Heart left ventricle (tissue), 16 donors: ENCODE measurements at regions of chr1 and their contacts with region 1.

Region 1: DNA sequence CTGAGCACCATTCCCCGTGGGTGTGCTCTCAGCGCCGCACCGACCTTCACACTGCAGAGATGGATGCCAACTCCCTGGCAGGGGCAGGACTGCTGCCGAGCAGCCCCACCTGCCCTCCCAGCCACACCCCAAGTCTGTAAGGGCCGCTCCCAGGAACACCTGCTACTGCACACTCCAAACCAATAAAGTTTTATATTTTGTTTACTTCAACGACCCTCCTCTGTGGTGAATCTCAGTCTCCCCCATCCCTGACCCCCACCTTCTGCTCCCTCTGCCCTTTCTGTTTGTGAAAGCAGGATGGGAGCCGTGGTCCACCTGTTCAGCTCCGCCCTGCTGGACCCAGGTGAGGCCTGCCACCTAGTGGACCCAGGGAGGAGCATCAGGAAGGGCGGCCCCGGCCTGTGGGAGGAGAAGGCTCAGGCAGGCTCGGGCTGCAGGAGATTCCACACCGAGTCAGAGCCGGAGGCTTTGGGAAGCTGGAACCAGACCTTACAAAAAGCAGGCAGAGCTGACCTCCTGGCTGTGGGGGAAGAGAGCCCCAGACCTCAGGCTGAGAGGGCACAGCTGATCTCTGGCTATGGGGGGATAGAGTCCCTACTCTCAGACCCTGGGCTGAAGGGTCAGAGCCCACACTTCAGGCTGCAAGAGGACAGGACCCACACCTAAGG is 982 bp upstream of the TMEM82 start:
- DNase-seq: peak; percentile 69 to 89 (median 72)
- ATAC-seq: peak; percentile 62 to 81 (median 75)
- H3K4me3 ChIP-seq: no peak overlapping the region
- H3K27ac ChIP-seq: no peak overlapping the region
- H3K4me1 ChIP-seq: peaks cover 0 to 29% (median 5%) of the 10 kb centered on the region in 12 donors
- H3K27me3 ChIP-seq: no peaks in the 10 kb centered on the region
- CTCF ChIP-seq: peak; percentile 67 to 82 (median 72)
- POLR2A ChIP-seq: no peak

Region 2: GRCh38 chr1:15595809-15596617 is 145.3 kb before region 1 on chr1:
- intact Hi-C with region 1: loop called in 8 of 10 experiments (anchors 1 to 10 kb)
- DNase-seq: no peak
- ATAC-seq: no peak
- H3K4me3 ChIP-seq: no peak overlapping the region
- H3K27ac ChIP-seq: peak overlapping the region in 1 of 12 donors; percentile 34
- H3K4me1 ChIP-seq: peaks cover 0 to 25% (median 5%) of the 10 kb centered on the region in 12 donors
- H3K27me3 ChIP-seq: no peaks in the 10 kb centered on the region
- CTCF ChIP-seq: no peak
- POLR2A ChIP-seq: no peak

Region 3: GRCh38 chr1:15656464-15656863 is 84.9 kb before region 1 on chr1:
- intact Hi-C with region 1: loop called in 2 of 10 experiments (anchors 2 to 5 kb)
- DNase-seq: no peak
- ATAC-seq: peak; percentile 51 to 84 (median 79)
- H3K4me3 ChIP-seq: no peak overlapping the region
- H3K27ac ChIP-seq: peak overlapping the region in 3 of 12 donors; percentile 20 to 54 (median 41)
- H3K4me1 ChIP-seq: peaks cover 0 to 16% (median 3%) of the 10 kb centered on the region in 12 donors
- H3K27me3 ChIP-seq: no peaks in the 10 kb centered on the region
- CTCF ChIP-seq: peak in 3 of 12 donors; percentile 16 to 23 (median 17)
- POLR2A ChIP-seq: no peak

Region 4: GRCh38 chr1:15757575-15758393 is 16.5 kb after region 1 on chr1:
- intact Hi-C with region 1: loop called in 1 of 10 experiments (anchors 2 kb)
- DNase-seq: peak in 2 of 5 donors; percentile 52 to 55
- ATAC-seq: peak in 3 of 4 donors; percentile 2 to 8 (median 3)
- H3K4me3 ChIP-seq: peak overlapping the region in 10 of 12 donors; percentile 66 to 95 (median 72)
- H3K27ac ChIP-seq: peak overlapping the region in 9 of 12 donors; percentile 37 to 87 (median 82)
- H3K4me1 ChIP-seq: peaks cover 0 to 57% (median 41%) of the 10 kb centered on the region in 12 donors
- H3K27me3 ChIP-seq: peaks cover 0 to 56% (median 3%) of the 10 kb centered on the region in 9 donors
- CTCF ChIP-seq: no peak
- POLR2A ChIP-seq: no peak